Right ventricle myocardium inferior (tissue), 1 donor: ENCODE measurements at regions of chr1 and their contacts with region 1.

Region 1: GRCh38 chr1:212608209-212608955 is at the start of gene ATF3:
- DNase-seq: peak; percentile 99
- ATAC-seq: peak; percentile 97
- total RNA-seq, gene ATF3: 13.7 TPM

Region 2: DNA sequence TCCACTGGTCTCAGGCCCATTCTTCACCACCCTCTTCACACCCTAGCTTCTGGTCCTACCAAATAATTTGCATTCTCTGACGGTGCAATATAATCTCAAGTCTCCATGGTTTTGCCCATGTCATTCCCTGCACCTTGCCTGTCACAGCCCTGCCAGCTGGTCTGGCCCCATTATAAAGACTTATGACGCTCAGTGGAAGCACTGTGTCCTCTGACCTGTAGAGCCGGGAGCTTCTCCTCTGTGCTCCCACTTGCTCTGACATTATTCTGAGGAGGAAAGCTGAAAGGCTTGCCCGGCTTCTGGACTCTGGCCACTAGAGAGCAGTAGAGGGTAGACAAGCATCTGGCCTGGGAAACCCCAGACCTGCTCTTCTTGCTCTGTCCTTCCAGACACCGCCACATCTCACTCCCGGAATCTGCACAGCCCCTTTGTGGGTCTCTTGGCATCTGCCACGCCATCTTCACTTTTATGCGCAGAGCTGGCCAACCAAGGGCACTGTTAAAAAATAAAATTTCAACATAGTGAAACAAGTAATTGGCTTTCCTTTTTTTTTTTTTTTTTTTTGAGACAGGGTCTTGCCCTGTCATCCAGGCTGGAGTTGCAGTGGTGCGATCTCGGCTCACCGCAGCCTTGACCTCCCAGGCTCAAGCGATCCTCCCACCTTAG is 131.2 kb before region 1 on chr1:
- intact Hi-C with region 1: loop called (anchors 2 kb)
- DNase-seq: peak; percentile 80
- ATAC-seq: peak; percentile 95

Region 3: GRCh38 chr1:212518188-212519054 is 90.0 kb before region 1 on chr1:
- intact Hi-C with region 1: loop called (anchors 2 kb)
- DNase-seq: peak; percentile 80
- ATAC-seq: peak; percentile 92

Region 4: DNA sequence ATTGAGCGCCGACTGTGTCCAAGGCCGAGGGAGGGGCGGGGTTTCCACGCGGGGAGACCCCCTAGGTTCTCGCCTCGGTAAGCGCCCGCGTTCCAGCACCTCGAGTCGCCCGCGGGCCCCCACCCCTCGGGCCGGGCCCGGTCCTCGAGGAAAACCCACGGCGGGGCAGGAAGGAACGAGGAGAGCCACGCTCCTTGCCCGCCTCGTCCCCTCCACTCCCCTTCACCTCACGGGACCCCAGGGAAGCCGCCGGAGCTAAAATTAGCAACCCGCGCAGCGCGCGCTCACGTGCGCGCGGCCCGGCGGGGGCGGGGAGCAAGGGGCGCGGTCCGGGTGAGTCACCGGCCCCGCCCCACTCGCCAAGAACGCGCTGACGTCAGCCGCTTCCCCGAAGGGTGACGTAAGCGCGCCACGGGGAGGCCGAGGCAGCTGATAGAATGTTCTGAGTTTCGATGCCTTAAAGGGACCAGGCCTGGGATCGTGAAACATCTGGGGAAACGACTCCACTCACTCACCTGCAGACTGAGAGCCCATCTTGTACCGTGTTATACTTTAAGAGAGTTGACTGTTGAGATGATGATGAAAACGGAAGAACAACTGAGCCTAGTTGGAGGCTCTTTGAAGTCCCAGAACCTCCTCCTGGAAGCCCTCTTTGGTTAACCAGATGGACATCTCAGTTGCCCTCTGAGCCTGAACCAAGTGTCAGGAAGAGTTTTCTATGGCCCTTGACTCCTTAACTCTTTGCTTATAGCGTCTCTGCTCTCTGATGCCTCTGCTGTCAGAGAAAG is 49.5 kb before region 1 on chr1:
- intact Hi-C with region 1: loop called (anchors 5 kb)
- DNase-seq: peak; percentile 96
- ATAC-seq: peak; percentile 96

Region 5: GRCh38 chr1:212630158-212630900 is 21.9 kb after region 1 on chr1:
- intact Hi-C with region 1: loop called (anchors 2 kb)
- DNase-seq: peak; percentile 84
- ATAC-seq: peak; percentile 85

Region 6: GRCh38 chr1:212665241-212666115 is 57.1 kb after region 1 on chr1:
- intact Hi-C with region 1: loop called (anchors 5 kb)
- DNase-seq: peak; percentile 93
- ATAC-seq: peak; percentile 98

Region 7: DNA sequence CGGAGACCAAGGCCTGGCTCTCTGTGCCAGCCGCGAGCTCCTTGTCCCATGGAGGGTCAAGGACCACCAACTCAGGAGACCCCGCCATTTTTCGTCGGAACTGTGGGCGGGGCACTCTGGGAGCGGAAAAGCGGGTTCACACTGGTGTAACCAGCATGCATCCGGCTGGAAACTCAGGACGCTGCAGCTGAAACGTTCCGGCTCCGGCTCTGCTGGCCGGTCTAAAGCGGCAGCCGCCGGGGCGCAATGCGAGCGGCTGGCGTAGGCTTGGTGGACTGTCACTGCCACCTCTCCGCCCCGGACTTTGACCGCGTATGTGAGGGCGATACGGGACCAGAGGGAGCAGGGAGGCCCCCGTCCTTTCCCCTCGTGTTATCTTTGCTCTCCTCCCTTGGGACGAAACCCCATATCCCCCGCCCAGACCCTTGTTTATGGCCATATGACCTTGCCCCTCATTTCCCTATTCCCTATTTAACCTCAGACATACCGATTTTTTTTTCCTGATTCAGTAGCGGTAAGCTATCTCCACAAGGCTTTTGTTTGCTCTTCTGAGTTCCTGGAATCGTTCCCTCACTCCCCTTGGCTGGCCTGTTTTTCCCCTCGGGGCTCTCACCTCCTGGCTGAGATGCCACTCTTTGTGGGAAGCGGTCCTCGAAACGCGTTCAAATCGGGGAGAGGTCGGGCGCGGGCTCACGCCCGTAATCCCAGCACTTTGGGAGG is 183.5 kb after region 1 on chr1 and contains the starts of genes NSL1 and TATDN3:
- intact Hi-C with region 1: loop called (anchors 1 kb)
- DNase-seq: peak; percentile 94
- ATAC-seq: peak; percentile 94
- total RNA-seq, gene NSL1: 26.7 TPM
- total RNA-seq, gene TATDN3: 20.5 TPM